Activated B cell treated with CpG ODN at 0.5 μM for 24 hours (primary cell): ENCODE measurements at regions of chr3 and their contacts with region 1.

Region 1: GRCh38 chr3:15629860-15630597 is 28.5 kb downstream of the BTD start:
- DNase-seq: no peak
- ATAC-seq: peak; percentile 100
- H3K4me3 Mint-ChIP-seq: peak overlapping the region; percentile 56
- H3K27ac Mint-ChIP-seq: peak overlapping the region; percentile 41
- H3K4me1 Mint-ChIP-seq: peaks cover 14% of the 10 kb centered on the region
- H3K27me3 Mint-ChIP-seq: no peaks in the 10 kb centered on the region
- CTCF ChIP-seq: no peak

Region 2: DNA sequence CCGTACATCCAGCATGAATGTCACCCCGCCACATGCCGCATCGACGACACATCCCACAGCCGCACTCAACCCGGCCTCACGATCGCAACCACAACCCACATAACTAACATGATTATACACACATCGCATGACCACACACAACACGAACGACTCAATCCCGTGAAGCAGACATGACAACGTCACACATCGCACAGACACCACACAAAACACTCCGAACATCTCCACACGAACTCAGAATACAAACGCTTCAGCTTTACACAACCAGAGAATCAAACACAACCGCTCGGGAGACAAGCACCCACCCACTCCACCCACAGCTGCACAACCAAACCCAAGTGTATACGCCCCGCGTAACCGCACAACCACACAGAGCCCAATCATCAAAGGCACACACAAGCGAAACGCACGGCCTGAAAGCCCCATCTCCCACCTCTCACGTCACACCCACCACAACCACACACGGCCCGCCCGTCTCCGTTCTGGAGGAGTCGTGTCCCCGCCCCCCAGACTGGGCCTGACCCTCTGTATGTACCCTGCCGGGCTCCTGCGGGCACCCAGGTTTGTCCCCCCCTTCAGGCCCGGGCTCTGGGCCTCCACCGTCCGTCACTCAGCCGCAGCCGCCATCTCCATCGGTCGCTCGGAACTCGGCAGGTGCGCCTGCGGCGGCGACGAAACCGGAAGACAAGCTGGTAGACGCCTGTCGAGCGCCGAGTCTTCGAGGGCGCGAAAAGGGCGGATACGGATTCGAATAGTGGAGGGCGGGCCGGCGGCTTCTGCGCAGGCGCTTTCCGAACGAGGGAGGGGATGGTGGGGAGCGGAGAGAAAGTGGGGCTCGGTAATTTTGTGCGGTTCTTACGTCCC is 531.3 kb before region 1 on chr3 and contains the start of gene RBSN:
- CTCF ChIA-PET with region 1: no interaction called
- POLR2A ChIA-PET with region 1: no interaction called
- intact Hi-C with region 1: no loop called
- DNase-seq: peak; percentile 89
- ATAC-seq: peak; percentile 79
- H3K4me3 Mint-ChIP-seq: peak within 1 kb of the TSS; percentile 96
- H3K27ac Mint-ChIP-seq: peak within 1 kb of the TSS; percentile 89
- H3K4me1 Mint-ChIP-seq: peaks cover 27% of the 10 kb centered on the region
- H3K27me3 Mint-ChIP-seq: peaks cover 7% of the 10 kb centered on the region
- CTCF ChIP-seq: no peak
- total RNA-seq, gene RBSN: 19.8 and 29.0 TPM in 2 replicates

Region 3: DNA sequence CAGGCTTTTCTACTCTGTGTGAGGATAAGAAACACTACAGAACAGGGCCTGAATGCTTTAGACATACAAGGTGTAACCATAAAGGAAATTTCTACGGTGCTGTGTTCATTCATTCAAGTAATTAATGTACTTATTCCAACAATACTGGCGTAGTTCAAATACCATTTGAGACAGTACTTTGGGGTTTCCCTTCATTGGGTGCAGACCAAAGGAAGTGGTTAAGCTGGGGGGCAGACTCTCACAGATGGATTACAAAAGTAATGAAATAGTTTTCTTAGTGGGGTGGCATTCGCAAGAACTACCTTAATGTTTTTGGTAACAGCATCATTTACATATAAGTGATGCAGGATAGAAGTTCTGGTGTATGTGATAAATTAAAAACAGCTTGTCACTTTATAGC is 37.5 kb after region 1 on chr3:
- CTCF ChIA-PET with region 1: no interaction called
- POLR2A ChIA-PET with region 1: no interaction called
- intact Hi-C with region 1: loop called (anchors 2 kb)
- DNase-seq: no peak
- ATAC-seq: peak; percentile 69
- H3K4me3 Mint-ChIP-seq: no peak overlapping the region
- H3K27ac Mint-ChIP-seq: no peak overlapping the region
- H3K4me1 Mint-ChIP-seq: peaks cover 14% of the 10 kb centered on the region
- H3K27me3 Mint-ChIP-seq: no peaks in the 10 kb centered on the region
- CTCF ChIP-seq: no peak

Region 4: GRCh38 chr3:15859507-15860013 is 229.5 kb after region 1 on chr3:
- CTCF ChIA-PET with region 1: no interaction called
- POLR2A ChIA-PET with region 1: no interaction called
- intact Hi-C with region 1: loop called (anchors 5 kb)
- DNase-seq: peak; percentile 77
- ATAC-seq: peak; percentile 77
- H3K4me3 Mint-ChIP-seq: peak overlapping the region; percentile 99
- H3K27ac Mint-ChIP-seq: peak overlapping the region; percentile 95
- H3K4me1 Mint-ChIP-seq: peaks cover 27% of the 10 kb centered on the region
- H3K27me3 Mint-ChIP-seq: no peaks in the 10 kb centered on the region
- CTCF ChIP-seq: no peak

Region 5: DNA sequence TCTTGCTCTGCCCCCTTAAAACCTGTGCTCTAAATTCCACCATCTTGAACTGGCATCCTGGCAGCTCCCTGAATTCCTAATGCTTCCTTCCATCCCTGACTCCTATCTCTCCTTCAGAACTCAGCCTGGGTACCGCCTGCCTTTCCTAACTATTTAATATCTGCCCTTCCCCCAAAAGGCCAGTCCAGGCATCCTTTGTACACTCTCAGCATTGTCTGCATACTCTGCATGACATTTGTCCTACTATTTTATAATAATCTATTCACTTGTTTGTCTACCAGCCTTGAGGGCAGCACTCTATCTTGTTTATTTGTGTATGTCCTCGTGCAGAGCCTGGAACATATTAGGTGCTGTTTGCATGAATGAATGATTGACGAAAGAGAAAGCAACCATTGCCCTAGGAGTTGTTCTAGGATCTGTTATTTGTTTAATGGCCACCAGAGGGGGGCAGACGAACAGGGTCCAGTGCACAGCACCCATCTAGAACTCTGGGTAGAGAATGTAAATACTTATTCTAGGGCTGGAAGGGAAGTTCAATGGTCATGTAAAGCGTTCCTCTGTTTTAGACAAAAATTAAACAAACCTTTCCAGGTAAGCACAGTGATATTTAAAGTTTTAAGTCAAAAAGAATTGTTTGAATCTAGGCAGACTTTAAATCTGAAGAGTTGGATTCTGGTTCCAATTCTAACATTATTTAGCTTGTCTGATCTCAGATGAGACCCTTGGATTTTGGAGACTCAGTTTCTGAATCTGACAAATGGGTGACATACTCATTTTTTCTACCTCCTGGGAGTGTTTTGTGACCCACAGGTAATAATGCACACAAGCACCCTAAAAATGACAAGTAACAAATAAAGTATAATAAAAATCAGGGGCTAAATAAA is 418.6 kb after region 1 on chr3:
- CTCF ChIA-PET with region 1: interaction called, 4 read pairs
- POLR2A ChIA-PET with region 1: no interaction called
- intact Hi-C with region 1: loop called (anchors 2 kb)
- DNase-seq: no peak
- ATAC-seq: peak; percentile 86
- H3K4me3 Mint-ChIP-seq: no peak overlapping the region
- H3K27ac Mint-ChIP-seq: no peak overlapping the region
- H3K4me1 Mint-ChIP-seq: no peaks in the 10 kb centered on the region
- H3K27me3 Mint-ChIP-seq: peaks cover 2% of the 10 kb centered on the region
- CTCF ChIP-seq: peak; percentile 27